HEK293 (cell line): ENCODE measurements at regions of chr17 and their contacts with region 1.

Region 1: GRCh38 chr17:31842183-31843069 is 16.6 kb downstream of the COPRS start:
- H3K4me3 ChIP-seq: no peak overlapping the region
- H3K27ac ChIP-seq: no peak overlapping the region
- H3K4me1 ChIP-seq: no peaks in the 10 kb centered on the region
- CTCF ChIP-seq: peak; percentile 88

Region 2: GRCh38 chr17:31388770-31389661 is 453.4 kb before region 1 on chr17:
- CTCF ChIA-PET with region 1: interaction called, 14 read pairs
- POLR2A ChIA-PET with region 1: no interaction called
- H3K4me3 ChIP-seq: no peak overlapping the region
- H3K27ac ChIP-seq: no peak overlapping the region
- H3K4me1 ChIP-seq: no peaks in the 10 kb centered on the region
- CTCF ChIP-seq: peak; percentile 55

Region 3: DNA sequence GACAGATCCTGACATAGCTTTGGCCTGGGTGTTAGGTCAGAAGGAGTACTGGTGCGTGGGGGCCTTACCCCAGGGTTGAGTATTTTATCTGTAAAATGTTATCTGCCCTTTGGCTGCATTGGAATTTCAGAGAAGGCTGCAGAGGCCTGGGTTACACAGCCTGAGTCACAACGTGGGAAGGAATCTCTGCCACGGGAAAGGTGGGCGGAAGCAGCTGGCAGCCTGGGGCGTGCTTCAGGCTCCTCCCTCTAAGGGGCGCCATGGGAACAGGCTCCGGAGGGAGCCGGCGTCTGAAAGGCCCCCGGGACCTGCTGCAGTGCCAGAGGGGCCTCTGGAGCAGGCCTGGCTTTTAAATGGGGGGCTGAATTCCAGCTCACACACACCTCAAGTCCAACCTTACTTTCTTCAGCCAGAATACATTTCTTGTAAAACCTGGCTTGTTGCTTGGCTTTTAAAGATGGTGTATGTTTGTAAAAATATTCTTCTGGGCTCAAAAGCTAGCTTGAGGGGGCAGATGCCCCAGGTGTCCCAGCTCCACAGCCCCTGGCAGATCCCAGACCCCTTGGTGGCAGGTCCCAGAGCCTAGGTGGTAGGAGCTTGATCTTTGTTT is 308.8 kb before region 1 on chr17:
- CTCF ChIA-PET with region 1: interaction called, 38 read pairs
- POLR2A ChIA-PET with region 1: interaction called, 3 read pairs
- H3K4me3 ChIP-seq: no peak overlapping the region
- H3K27ac ChIP-seq: no peak overlapping the region
- H3K4me1 ChIP-seq: peaks cover 15% of the 10 kb centered on the region
- CTCF ChIP-seq: 0 out of 2 replicates have a peak, but pooled peaks have one; percentile 54

Region 4: GRCh38 chr17:31558748-31559644 is 283.4 kb before region 1 on chr17:
- CTCF ChIA-PET with region 1: interaction called, 52 read pairs
- POLR2A ChIA-PET with region 1: no interaction called
- H3K4me3 ChIP-seq: peak overlapping the region; percentile 52
- H3K27ac ChIP-seq: peak overlapping the region; percentile 57; the same call in 1 of the 2 replicates
- H3K4me1 ChIP-seq: peaks cover 13% of the 10 kb centered on the region
- CTCF ChIP-seq: peak; percentile 54

Region 5: GRCh38 chr17:31754239-31754945 is 88.0 kb before region 1 on chr17:
- CTCF ChIA-PET with region 1: no interaction called
- POLR2A ChIA-PET with region 1: no interaction called
- H3K4me3 ChIP-seq: no peak overlapping the region
- H3K27ac ChIP-seq: no peak overlapping the region
- H3K4me1 ChIP-seq: no peaks in the 10 kb centered on the region
- CTCF ChIP-seq: no peak

Region 6: DNA sequence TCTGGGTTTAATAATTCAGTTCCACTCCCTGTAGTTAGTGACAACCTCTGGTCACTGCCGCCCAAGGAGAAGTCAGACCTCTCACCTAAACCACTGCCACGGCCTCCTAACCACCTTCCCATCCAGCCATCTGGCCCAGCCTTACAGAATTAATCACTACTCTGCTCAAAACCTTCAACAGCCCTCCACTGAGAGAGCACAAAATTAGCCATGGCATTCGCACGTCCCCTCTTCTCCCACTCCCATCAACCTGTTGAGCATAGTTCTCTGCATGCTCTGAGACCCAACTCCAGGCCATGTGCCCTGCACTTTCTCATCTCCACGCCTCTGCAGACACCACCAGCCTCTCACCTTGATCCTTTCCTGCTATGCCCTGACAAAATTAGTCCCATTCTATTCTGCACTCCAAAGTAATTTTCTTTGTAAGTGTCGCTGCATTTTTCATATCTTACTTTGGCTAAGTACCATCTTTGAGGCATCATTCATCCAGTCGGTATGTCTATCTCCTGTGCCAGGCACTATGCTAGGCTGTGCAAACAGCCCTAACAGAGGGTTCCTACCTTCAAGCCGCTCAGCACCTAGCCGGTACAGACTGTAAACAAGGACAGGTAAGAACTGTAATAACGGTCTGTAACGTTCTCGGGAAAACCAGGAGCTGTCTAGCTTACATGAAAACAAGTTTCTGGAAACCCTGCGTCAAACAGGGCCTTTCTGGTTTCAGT is 15.7 kb after region 1 on chr17:
- CTCF ChIA-PET with region 1: interaction called, 24 read pairs
- POLR2A ChIA-PET with region 1: interaction called, 6 read pairs
- H3K4me3 ChIP-seq: peak overlapping the region; percentile 46
- H3K27ac ChIP-seq: no peak overlapping the region
- H3K4me1 ChIP-seq: peaks cover 6% of the 10 kb centered on the region
- CTCF ChIP-seq: no peak

Region 7: DNA sequence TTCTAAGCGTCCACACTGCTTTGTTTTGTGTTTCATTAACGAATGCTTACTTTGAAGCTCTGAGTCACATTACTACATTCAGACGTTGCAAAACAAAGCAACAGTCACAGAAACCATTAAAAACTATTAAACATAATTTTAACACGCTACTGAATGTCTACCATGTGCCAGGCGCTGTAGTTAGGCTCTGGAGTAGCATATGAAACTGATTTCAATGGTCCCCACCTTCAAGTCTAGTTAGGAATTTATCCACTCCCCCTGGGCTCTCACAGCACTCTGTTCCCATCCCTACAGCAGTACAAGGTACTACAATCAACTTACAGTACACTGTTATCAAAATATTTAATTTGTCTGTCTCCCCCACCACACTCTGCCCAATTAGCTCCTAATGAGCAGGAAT is 58.5 kb after region 1 on chr17:
- CTCF ChIA-PET with region 1: no interaction called
- POLR2A ChIA-PET with region 1: no interaction called
- H3K4me3 ChIP-seq: peak overlapping the region; percentile 94
- H3K27ac ChIP-seq: peak overlapping the region; percentile 80
- H3K4me1 ChIP-seq: no peaks in the 10 kb centered on the region; the same call in none of the 2 replicates
- CTCF ChIP-seq: no peak